Left ventricle myocardium superior (tissue), 1 donor: ENCODE measurements at regions of chr17 and their contacts with region 1.

Region 1: GRCh38 chr17:56592487-56593085 is 913 bp upstream of the NOG start:
- DNase-seq: peak; percentile 85
- ATAC-seq: peak; percentile 88

Region 2: GRCh38 chr17:56521104-56521777 is 71.3 kb before region 1 on chr17:
- intact Hi-C with region 1: no loop called
- DNase-seq: no peak
- ATAC-seq: peak; percentile 17

Region 3: DNA sequence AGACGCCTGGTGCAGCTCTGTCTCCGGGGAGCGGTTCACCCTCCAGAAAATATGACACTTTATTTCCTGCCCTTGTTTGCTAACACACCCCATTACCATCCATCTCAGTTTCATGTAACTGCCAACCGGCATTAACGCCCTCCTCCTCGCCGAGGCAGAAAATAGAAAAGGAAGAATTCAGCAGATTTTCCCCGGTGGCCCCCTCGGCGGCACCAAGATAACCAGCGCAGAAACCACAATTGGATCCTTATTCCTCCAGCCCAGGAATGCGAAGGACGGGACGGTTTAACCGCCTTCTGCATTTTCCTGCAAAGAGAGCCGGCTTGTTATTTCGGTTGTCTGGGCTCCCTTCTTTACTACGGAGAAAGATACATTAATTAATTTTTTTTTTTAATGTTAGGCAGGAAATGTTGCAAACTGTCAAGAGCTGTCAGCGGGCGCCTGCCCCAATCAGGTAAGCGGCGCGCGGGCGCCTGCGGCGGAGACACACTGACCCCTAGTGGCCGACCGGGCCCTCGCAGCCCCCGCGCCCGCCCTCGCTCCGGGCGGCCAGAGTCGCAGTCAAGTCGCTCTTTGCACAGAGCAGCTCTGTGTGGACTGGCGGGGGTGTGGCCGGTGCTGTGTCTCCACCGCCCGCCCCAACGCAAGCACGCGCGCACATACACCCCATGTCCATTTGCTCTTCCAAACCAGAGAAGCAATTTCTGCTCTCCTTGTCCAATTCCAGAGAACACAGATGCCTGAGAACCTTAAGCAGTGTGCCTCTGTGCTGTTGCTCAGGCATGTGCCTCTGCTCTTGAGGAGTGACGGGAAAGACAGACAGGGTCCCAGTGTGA is 187.5 kb after region 1 on chr17:
- intact Hi-C with region 1: loop called (anchors 10 kb)
- DNase-seq: peak; percentile 86
- ATAC-seq: peak; percentile 98